OCI-LY7 (cell line): ENCODE measurements at regions of chr17 and their contacts with region 1.

Region 1: GRCh38 chr17:63931099-63931561 is 1.0 kb downstream of the CD79B start:
- DNase-seq: peak; percentile 83
- H3K4me3 ChIP-seq: peak overlapping the region; percentile 98
- H3K27ac ChIP-seq: peak overlapping the region; percentile 99
- H3K4me1 ChIP-seq: peaks cover 73% of the 10 kb centered on the region
- CTCF ChIP-seq: no peak

Region 2: DNA sequence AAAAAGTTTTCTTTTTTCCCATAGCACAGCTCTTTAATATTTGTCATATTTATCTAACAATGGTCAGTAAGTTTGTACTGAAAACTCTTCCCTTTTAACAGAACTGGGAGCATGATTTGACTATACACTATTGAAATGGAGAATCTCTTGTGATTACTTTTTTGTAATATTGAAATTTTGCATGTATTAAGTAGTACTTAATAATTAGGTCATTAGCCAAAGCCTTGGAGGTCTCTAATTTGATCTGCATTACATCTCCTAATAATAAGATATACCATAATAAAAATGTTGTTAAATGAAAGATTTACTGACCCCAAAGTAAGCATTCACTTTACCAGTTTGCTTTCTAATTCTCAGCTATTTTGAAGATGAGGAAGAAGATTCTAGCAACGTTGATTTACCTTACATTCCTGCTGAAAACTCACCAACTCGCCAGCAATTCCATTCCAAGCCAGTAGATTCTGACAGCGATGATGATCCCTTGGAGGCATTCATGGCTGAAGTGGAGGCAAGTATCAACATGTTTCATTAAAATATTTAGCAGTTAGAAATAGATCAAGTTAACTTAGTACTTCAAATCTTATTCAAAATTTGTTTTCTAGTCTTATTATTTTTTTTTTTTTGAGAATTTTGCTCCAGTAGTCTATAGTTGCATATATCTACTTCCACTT is 138.9 kb before region 1 on chr17:
- CTCF ChIA-PET with region 1: no interaction called
- POLR2A ChIA-PET with region 1: no interaction called
- intact Hi-C with region 1: no loop called
- DNase-seq: no peak
- H3K4me3 ChIP-seq: no peak overlapping the region
- H3K27ac ChIP-seq: no peak overlapping the region
- H3K4me1 ChIP-seq: no peaks in the 10 kb centered on the region
- CTCF ChIP-seq: no peak

Region 3: DNA sequence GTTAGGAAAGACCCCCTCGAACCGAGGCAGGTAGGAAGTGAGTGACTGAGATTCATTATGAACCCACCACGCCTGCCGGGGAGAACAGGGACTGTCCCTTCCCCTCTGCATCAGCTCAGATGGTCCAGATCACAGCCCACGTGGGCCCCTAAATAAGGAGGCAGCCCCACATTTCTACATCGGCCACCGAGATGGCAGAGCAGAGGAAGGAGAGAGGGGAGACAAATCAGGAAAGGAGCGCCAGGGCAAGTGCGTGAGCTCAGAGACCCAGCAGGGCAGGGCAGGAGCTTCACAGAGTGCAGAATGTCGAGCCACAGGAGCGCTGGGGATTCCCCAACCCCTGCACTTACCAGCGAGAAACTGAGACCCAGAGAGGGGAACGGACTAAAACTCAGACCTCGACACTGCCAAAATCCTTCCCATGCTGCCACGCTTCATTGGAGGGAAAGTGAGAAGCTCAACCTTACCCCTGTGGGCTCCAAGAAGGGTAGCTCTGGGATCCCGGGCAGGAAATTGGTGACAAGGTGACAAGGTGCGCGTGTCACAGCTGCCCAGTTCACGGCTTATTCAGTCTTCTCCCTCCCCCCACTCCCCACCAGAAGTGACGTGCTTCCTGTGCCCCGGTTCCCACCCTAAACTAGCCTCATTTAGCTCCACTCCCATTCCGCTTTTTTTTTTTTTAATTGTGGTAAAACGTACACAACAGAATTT is 89.1 kb after region 1 on chr17 and contains the start of gene ICAM2:
- CTCF ChIA-PET with region 1: interaction called, 8 read pairs
- POLR2A ChIA-PET with region 1: interaction called, 5 read pairs
- intact Hi-C with region 1: loop called (anchors 5 kb)
- DNase-seq: peak; percentile 91
- H3K4me3 ChIP-seq: peak within 1 kb of the TSS; percentile 79
- H3K27ac ChIP-seq: peak within 1 kb of the TSS; percentile 97
- H3K4me1 ChIP-seq: peaks cover 67% of the 10 kb centered on the region
- CTCF ChIP-seq: no peak
- total RNA-seq, gene ICAM2: 76.4 and 112 TPM in 2 replicates